ENCODE measurements at regions of chr1 and their contacts with region 1.

Region 1: GRCh38 chr1:71850936-71851335 is 431.4 kb downstream of the NEGR1 start:
- DNase-seq: no peak
- H3K4me3 ChIP-seq: no peak overlapping the region
- H3K4me3 Mint-ChIP-seq: no peak overlapping the region
- H3K27ac Mint-ChIP-seq: no peak overlapping the region
- H3K4me1 ChIP-seq: no peaks in the 10 kb centered on the region
- H3K4me1 Mint-ChIP-seq: no peaks in the 10 kb centered on the region
- H3K27me3 ChIP-seq: no peaks in the 10 kb centered on the region
- H3K27me3 Mint-ChIP-seq: peaks cover 2% of the 10 kb centered on the region
- CTCF ChIP-seq: no peak

Region 2: GRCh38 chr1:71869326-71869725 is 18.4 kb after region 1 on chr1:
- CTCF ChIA-PET with region 1: no interaction called
- POLR2A ChIA-PET with region 1: no interaction called
- intact Hi-C with region 1: no loop called
- DNase-seq: no peak
- H3K4me3 ChIP-seq: no peak overlapping the region
- H3K4me3 Mint-ChIP-seq: no peak overlapping the region
- H3K27ac Mint-ChIP-seq: no peak overlapping the region
- H3K4me1 ChIP-seq: no peaks in the 10 kb centered on the region
- H3K4me1 Mint-ChIP-seq: no peaks in the 10 kb centered on the region
- H3K27me3 ChIP-seq: no peaks in the 10 kb centered on the region
- H3K27me3 Mint-ChIP-seq: no peaks in the 10 kb centered on the region
- CTCF ChIP-seq: no peak

Region 3: DNA sequence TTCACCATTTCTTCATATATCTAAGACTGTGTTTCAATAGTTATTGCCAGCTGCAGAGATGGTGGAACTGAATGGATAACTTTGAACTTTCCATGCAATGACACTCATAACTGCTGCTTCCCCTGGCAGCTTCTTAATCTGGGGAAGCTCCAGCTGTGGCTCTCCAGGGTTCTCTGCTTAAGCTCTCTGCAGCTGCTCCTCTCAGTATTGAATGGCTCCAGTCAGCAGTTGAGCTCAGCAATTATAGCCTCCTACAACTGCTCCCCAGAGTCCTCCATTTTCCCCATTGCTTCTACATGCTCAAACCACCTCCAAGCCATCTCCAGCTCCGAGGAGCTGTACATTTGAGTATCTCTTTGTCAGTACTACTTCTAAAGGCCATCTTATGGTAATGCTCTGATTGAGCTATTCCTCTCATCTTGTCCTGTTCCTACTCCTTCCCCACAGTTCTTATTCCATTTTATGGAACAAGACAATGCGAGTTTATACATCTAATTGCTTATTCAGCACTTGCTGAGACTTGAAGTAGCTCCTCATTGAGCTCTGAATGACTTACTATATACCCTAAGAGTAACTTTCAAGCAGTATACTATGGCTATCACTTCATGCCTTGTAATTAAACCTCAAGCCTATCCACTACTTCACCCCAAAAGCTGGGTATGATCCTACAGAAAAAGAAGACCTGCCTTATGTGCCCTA is 69.0 kb after region 1 on chr1:
- CTCF ChIA-PET with region 1: no interaction called
- POLR2A ChIA-PET with region 1: no interaction called
- intact Hi-C with region 1: loop called (anchors 2 kb)
- DNase-seq: no peak
- H3K4me3 ChIP-seq: no peak overlapping the region
- H3K4me3 Mint-ChIP-seq: no peak overlapping the region
- H3K27ac Mint-ChIP-seq: no peak overlapping the region
- H3K4me1 ChIP-seq: no peaks in the 10 kb centered on the region
- H3K4me1 Mint-ChIP-seq: no peaks in the 10 kb centered on the region
- H3K27me3 ChIP-seq: no peaks in the 10 kb centered on the region
- H3K27me3 Mint-ChIP-seq: no peaks in the 10 kb centered on the region
- CTCF ChIP-seq: no peak

Region 4: GRCh38 chr1:72579629-72580028 is 728.7 kb after region 1 on chr1:
- CTCF ChIA-PET with region 1: no interaction called
- POLR2A ChIA-PET with region 1: no interaction called
- intact Hi-C with region 1: no loop called
- DNase-seq: no peak
- H3K4me3 ChIP-seq: no peak overlapping the region
- H3K4me3 Mint-ChIP-seq: no peak overlapping the region
- H3K27ac Mint-ChIP-seq: no peak overlapping the region
- H3K4me1 ChIP-seq: no peaks in the 10 kb centered on the region
- H3K4me1 Mint-ChIP-seq: no peaks in the 10 kb centered on the region
- H3K27me3 ChIP-seq: no peaks in the 10 kb centered on the region
- H3K27me3 Mint-ChIP-seq: no peaks in the 10 kb centered on the region
- CTCF ChIP-seq: no peak